ENCODE measurements at regions of chr11 and their contacts with region 1.

Region 1: DNA sequence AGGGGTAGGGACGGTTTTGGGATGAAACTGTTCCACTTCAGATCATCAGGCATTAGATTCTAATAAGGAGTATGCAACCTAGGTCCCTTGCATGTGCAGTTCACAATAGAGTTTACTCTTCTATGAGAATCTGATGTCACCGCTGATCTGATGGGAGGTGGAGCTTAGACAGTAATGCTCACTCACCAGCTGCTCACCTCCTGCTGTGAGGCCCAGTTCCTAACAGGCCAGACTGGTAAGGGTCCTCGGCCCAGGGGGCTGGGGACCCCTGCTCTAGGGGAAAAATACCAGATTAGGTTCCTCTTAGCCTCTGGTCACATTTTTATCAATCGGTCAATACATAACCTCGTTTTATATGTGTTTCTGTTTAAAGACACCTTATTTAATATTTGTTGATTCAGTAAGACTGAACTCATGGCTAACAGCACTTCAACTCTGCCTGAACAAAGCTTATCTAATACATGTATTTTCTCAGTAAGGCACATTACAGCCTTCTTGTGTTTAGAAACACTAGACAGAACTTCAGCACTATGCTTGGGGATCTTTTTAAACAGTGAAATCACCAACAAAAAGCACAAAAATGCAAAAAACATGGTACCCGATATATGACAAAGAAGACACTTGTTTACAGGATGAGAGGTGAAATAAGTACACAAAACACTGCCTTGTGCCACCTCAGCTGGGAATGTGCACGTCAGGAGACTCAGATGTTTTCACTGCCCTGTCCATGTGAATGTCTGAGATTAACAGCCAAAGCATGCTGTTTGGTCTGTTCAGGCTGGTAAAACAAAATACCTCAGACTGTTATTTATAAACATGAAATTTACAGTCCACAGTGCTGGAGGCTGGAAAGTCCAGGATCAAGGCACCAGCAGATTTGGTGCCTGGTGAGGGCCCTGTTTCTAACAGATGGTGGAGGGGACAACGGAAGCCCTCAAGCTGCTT is 107.5 kb downstream of the USP35 start:
- DNase-seq: no peak
- H3K4me3 ChIP-seq: no peak overlapping the region
- H3K27ac ChIP-seq: no peak overlapping the region
- H3K4me1 ChIP-seq: peaks cover 0 to 14% (median 6%) of the 10 kb centered on the region in 4 donors
- H3K27me3 ChIP-seq: no peaks in the 10 kb centered on the region
- CTCF ChIP-seq: no peak
- EP300 ChIP-seq: no peak
- POLR2A ChIP-seq: no peak

Region 2: DNA sequence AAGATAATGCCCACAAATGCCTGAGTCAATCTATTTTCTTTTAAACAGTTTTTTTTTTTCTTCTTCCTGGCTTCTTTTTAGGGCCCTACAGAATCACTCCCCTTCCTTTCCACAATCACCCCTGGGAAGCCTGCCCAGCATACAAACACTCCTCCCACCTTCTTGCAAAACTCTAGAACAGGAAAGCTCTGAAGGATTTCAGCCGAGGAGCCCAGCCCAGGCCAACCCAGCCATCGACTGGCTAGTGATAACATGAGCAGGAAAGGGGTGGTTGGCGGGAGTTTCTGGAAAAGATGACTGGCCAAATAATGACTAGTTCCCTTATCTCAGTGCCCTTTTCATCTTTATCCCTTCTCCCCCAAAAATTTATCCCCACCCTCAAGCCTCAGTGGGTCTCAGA is 39.3 kb before region 1 on chr11:
- intact Hi-C with region 1: loop called (anchors 5 kb)
- DNase-seq: peak; percentile 91
- H3K4me3 ChIP-seq: no peak overlapping the region
- H3K27ac ChIP-seq: peak overlapping the region; percentile 23 to 54 (median 40)
- H3K4me1 ChIP-seq: peaks cover 15 to 30% (median 19%) of the 10 kb centered on the region in 4 donors
- H3K27me3 ChIP-seq: no peaks in the 10 kb centered on the region
- CTCF ChIP-seq: no peak
- EP300 ChIP-seq: no peak
- POLR2A ChIP-seq: no peak